Right lobe of liver (tissue), 6 donors: ENCODE measurements at regions of chr10 and their contacts with region 1.

Region 1: DNA sequence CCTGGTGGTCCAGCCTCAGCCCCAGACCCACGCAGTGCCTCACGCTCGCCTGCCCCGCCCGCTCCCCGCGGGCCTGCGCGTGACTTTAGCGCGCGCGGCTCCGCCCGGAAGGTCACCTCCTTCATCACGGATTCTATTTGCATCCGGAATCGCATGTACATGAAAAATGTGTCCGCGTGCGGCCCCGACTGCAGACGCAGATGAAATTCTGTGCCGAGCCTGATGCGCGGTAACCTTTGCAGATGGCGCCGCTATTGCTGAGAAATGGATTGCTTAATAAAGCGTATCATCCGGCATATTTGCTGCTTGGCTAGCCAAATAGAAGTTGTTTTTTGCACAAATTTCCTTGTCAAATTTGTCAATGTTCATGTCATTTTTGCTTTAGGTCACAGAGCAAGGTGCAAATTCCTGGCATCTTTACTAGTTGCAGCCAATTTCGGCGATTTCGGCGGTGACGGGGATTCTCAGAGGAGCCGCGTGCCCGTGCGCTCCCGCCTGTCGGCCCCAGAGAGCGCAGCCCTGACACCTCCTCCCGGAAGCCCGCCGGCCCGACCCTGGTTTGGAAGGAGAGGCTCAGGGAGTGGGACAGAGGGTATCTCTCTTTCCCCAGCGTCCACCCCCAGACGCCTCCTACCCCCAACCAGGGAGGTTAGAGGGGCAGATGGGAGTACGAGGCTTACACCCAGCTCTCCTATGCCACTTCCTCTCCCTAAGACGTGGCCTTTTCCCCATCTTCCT is 85.9 kb upstream of the PAX2 start:
- DNase-seq: no peak
- ATAC-seq: no peak
- H3K4me3 ChIP-seq: no peak overlapping the region
- H3K27ac ChIP-seq: no peak overlapping the region
- H3K4me1 ChIP-seq: peaks cover 0 to 4% (median 0%) of the 10 kb centered on the region in 4 donors
- H3K27me3 ChIP-seq: peaks cover 0 to 31% of the 10 kb centered on the region in 2 donors
- CTCF ChIP-seq: no peak
- POLR2A ChIP-seq: no peak

Region 2: DNA sequence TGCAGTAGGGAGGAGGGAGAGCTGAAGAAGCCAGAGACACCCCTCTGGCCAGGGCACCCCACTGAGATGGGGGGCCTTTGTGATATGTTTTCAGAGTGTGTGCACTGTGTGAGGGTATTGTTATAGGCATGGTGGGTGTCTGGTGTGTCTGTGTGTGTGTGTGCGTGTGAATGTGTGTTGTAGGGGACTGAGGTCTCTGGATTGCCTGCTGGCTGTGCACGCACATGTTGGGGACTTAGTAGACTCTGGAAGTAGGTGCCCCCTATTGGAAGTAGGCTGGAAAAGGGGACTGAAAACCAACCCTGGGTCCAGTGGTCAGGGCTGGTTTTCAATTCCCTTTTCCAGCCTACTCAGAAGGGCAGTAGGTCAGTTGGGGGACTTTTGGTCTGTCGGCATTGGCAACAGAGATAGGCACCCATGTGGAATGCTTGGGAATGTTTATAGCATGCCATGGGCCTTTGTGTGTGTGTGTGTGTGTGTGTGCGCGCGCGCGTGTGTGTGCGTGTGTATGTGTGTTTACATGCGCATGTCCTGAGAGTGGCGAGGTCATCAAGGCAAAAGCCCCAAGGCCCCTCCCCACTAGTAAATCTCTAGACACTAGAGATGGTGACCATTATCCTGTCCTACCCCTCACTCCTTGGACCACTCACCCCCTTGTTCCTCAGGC is 45.0 kb before region 1 on chr10:
- intact Hi-C with region 1: no loop called
- DNase-seq: no peak
- ATAC-seq: no peak
- H3K4me3 ChIP-seq: no peak overlapping the region
- H3K27ac ChIP-seq: no peak overlapping the region
- H3K4me1 ChIP-seq: no peaks in the 10 kb centered on the region
- H3K27me3 ChIP-seq: no peaks in the 10 kb centered on the region
- CTCF ChIP-seq: no peak
- POLR2A ChIP-seq: no peak

Region 3: DNA sequence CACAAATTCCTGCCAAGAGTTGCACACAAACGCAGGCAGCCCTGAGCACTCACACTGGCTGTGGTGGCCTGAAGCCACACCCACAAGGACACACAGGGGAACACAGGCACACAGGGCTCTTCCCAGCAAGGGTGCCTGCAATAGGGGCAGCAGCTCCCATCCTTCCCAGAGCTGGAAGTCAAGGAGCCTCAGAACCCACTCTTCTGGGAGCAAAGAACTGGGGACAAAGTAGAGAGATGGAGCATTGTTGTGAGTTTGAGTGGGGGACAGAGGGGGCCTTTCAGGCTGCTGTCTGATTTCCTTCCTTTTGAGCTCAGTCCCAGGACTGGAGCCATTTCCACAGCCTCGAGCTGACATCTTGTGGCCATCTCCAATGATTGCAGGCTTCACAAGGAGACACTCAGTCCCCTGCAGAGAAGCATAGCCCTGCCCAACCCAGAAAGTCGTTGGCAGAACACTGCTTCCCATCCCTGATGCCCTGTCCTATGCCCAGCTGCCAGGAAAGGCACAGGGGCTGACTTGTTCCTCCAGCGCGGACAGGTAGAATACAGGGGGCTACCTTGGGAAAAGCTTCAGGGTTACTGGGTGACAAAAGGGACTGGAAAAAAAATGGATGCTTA is 218.9 kb after region 1 on chr10:
- intact Hi-C with region 1: loop called in 1 of 2 experiments (anchors 10 kb)
- DNase-seq: peak; percentile 34 to 66 (median 61)
- ATAC-seq: peak; percentile 87 to 94 (median 90)
- H3K4me3 ChIP-seq: no peak overlapping the region
- H3K27ac ChIP-seq: no peak overlapping the region
- H3K4me1 ChIP-seq: peaks cover 0 to 23% (median 6%) of the 10 kb centered on the region in 4 donors
- H3K27me3 ChIP-seq: no peaks in the 10 kb centered on the region
- CTCF ChIP-seq: peak; percentile 61 to 76 (median 70)
- POLR2A ChIP-seq: no peak

Region 4: GRCh38 chr10:101000915-101001658 is 341.6 kb after region 1 on chr10:
- intact Hi-C with region 1: loop called in 1 of 2 experiments (anchors 10 kb)
- DNase-seq: peak; percentile 70 to 79 (median 78)
- ATAC-seq: peak in 3 of 4 donors; percentile 5 to 35 (median 19)
- H3K4me3 ChIP-seq: peak overlapping the region in 1 of 3 donors; percentile 81
- H3K27ac ChIP-seq: peak overlapping the region; percentile 88 to 96 (median 88)
- H3K4me1 ChIP-seq: peaks cover 0 to 18% (median 3%) of the 10 kb centered on the region in 4 donors
- H3K27me3 ChIP-seq: no peaks in the 10 kb centered on the region
- CTCF ChIP-seq: no peak
- POLR2A ChIP-seq: no peak